ENCODE measurements at regions of chr15 and their contacts with region 1.

Region 1: DNA sequence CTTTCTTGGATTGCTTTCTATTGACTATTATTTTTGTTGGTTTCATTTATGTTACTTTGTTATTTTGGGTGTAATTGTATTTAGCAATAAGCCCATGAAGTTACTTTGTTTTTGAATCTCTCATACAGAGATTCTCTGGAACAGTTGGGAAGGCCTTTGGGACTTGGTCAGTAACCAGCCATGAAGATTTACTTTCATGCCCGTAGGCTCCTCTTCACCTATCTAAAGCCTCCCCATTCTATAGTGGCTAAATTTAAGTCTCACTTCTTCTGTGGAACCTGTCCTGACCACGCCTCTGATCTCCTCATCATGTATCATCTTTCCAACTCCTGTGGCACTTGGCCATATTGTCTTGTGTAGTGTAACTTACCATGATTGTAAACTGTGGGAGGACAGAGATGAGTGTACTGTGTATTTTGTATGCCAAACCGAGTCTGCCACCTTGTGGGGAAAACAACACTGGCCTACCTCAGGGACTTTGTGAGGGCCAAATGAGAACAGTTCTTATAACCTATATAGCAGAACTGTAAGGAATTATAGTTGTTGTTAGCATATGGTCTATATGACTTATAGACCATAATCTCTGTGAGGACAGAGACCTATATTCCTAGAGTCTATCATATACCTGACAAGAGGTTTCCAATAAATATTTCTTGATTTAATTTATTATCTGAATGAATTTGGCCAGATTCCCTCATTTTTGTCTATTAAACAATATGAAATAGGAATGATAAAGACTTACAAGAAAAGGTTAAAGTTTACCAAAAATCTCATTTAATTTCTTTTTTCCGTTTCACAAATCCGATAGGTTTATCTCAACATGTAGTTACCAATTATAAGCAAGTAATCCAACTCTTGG is 75.0 kb downstream of the STARD9 start:
- DNase-seq: no peak
- ATAC-seq: peak; percentile 81
- H3K4me3 Mint-ChIP-seq: no peak overlapping the region
- H3K27ac Mint-ChIP-seq: no peak overlapping the region
- H3K4me1 Mint-ChIP-seq: peaks cover 9% of the 10 kb centered on the region
- H3K27me3 Mint-ChIP-seq: no peaks in the 10 kb centered on the region
- CTCF ChIP-seq: no peak

Region 2: GRCh38 chr15:42474827-42475226 is 175.6 kb before region 1 on chr15:
- CTCF ChIA-PET with region 1: no interaction called
- POLR2A ChIA-PET with region 1: no interaction called
- intact Hi-C with region 1: loop called (anchors 10 kb)
- DNase-seq: no peak
- ATAC-seq: no peak
- H3K4me3 Mint-ChIP-seq: no peak overlapping the region
- H3K27ac Mint-ChIP-seq: peak overlapping the region; percentile 59
- H3K4me1 Mint-ChIP-seq: peaks cover 25% of the 10 kb centered on the region
- H3K27me3 Mint-ChIP-seq: no peaks in the 10 kb centered on the region
- CTCF ChIP-seq: no peak

Region 3: DNA sequence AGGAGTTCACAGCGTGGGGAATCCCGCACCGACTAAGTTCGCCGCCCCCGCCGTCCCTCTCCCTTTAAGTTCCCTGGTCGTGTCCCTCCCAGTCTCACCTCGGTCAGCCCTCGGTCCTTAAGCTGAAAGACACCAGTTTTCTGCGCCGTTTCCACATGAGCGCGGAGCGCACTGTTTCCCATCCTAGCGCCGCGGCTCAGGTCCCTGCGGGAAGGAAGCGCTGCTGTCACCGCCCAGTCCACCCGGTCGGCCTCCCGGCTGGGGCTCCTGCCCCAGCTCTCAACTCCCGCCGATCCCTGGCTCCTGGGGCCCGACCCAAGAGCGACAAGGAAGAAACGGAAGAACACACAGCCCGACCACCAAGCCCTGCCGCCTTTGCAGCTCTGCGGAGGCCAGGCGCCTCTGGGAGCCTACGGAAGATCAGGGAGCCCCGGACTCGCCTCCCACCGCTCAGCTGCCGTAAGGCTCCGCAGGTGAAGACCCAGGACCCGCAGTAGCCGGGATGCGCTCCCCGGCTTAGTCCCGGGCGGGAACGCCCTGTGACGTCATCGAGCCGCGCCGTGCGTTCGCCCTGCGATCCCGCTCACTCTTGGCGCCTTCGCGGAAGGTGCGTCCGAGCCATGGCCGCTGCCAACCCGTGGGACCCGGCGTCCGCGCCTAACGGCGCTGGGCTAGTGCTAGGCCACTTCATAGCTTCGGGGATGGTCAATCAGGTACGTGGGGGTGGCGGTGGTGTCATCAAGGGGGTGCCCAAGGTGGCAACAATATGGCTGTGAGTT is 102.0 kb before region 1 on chr15 and contains the starts of genes HAUS2 and LRRC57:
- CTCF ChIA-PET with region 1: no interaction called
- POLR2A ChIA-PET with region 1: no interaction called
- intact Hi-C with region 1: loop called (anchors 2 kb)
- DNase-seq: peak; percentile 88
- ATAC-seq: peak; percentile 86
- H3K4me3 Mint-ChIP-seq: peak within 1 kb of the TSS; percentile 96
- H3K27ac Mint-ChIP-seq: peak within 1 kb of the TSS; percentile 93
- H3K4me1 Mint-ChIP-seq: peaks cover 36% of the 10 kb centered on the region
- H3K27me3 Mint-ChIP-seq: no peaks in the 10 kb centered on the region
- CTCF ChIP-seq: no peak
- total RNA-seq, gene HAUS2: 18.2 and 20.8 TPM in 2 replicates
- total RNA-seq, gene LRRC57: 16.1 and 21.4 TPM in 2 replicates

Region 4: GRCh38 chr15:42575188-42576039 is 75.0 kb before region 1 on chr15 and contains the start of gene STARD9:
- CTCF ChIA-PET with region 1: no interaction called
- POLR2A ChIA-PET with region 1: no interaction called
- intact Hi-C with region 1: loop called (anchors 2 kb)
- DNase-seq: peak; percentile 98
- ATAC-seq: peak; percentile 85
- H3K4me3 Mint-ChIP-seq: peak within 1 kb of the TSS; percentile 96
- H3K27ac Mint-ChIP-seq: peak within 1 kb of the TSS; percentile 83
- H3K4me1 Mint-ChIP-seq: peaks cover 21% of the 10 kb centered on the region
- H3K27me3 Mint-ChIP-seq: no peaks in the 10 kb centered on the region
- CTCF ChIP-seq: no peak
- total RNA-seq, gene STARD9: 5.5 and 7.1 TPM in 2 replicates

Region 5: GRCh38 chr15:42582569-42583375 is 67.7 kb before region 1 on chr15:
- CTCF ChIA-PET with region 1: no interaction called
- POLR2A ChIA-PET with region 1: interaction called, 3 read pairs
- intact Hi-C with region 1: loop called (anchors 2 kb)
- DNase-seq: no peak
- ATAC-seq: no peak
- H3K4me3 Mint-ChIP-seq: no peak overlapping the region
- H3K27ac Mint-ChIP-seq: no peak overlapping the region
- H3K4me1 Mint-ChIP-seq: peaks cover 17% of the 10 kb centered on the region
- H3K27me3 Mint-ChIP-seq: no peaks in the 10 kb centered on the region
- CTCF ChIP-seq: no peak

Region 6: GRCh38 chr15:44250566-44251205 is 1600.2 kb after region 1 on chr15:
- CTCF ChIA-PET with region 1: no interaction called
- POLR2A ChIA-PET with region 1: no interaction called
- intact Hi-C with region 1: no loop called
- DNase-seq: no peak
- ATAC-seq: no peak
- H3K4me3 Mint-ChIP-seq: no peak overlapping the region
- H3K27ac Mint-ChIP-seq: no peak overlapping the region
- H3K4me1 Mint-ChIP-seq: no peaks in the 10 kb centered on the region
- H3K27me3 Mint-ChIP-seq: peaks cover 5% of the 10 kb centered on the region
- CTCF ChIP-seq: no peak

Measured in activated B cell treated with CpG ODN at 0.5 μM for 24 hours (primary cell).